Natural killer cell (primary cell): ENCODE measurements at regions of chr12 and their contacts with region 1.

Region 1: DNA sequence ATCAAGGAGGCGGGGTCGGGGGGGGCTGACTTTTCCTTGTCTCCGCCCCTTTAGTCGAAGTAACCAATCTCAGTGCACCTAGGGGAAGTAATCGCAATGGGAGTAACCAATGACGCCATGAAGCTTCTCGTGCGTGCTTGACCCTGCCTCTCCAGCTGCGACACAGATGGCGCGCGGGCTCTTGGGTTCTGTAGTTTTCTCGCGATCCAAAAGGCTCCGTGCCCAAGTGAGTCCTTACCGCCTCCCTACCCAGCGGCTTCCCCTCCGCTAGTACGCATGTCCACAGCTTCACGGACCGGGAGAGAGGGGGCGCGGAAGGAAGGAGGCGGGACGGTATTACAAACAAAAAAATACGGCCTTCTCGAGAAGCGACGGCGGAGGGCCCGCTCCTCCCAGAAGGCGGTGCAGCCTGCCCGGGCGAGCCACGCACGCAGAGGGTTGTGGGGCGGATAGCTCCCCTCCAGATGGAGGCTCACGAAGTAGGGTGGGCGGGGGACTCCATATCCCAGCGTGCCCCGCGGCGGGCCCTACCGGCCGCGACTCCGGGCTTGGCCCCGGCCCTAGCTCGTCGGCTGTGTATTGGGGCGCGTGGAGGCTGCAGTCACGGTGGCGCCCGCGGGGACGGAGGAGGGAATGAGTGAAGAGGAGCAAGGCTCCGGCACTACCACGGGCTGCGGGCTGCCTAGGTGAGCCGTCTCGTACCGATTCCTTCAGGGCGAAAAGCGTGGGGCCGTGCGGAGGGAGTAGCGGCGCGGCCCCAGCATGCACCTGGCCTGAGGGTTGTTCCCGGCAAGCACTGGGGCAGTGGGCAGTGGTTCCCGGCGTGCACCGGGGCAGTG is at the start of gene TARBP2:
- DNase-seq: peak; percentile 97 to 99
- ATAC-seq: peak; percentile 78 to 92 (median 82)
- H3K4me3 ChIP-seq: peak within 1 kb of the TSS; percentile 56
- H3K4me3 Mint-ChIP-seq: peak within 1 kb of the TSS; percentile 99
- H3K27ac ChIP-seq: peak within 1 kb of the TSS; percentile 99
- H3K27ac Mint-ChIP-seq: peak within 1 kb of the TSS; percentile 98 to 99
- H3K4me1 ChIP-seq: peaks cover 34% of the 10 kb centered on the region
- H3K4me1 Mint-ChIP-seq: peaks cover 18 to 37% of the 10 kb centered on the region in 2 donors
- H3K27me3 ChIP-seq: no peaks in the 10 kb centered on the region
- H3K27me3 Mint-ChIP-seq: no peaks in the 10 kb centered on the region
- CTCF ChIP-seq: no peak
- total RNA-seq, gene TARBP2: 23.8 to 35.1 (median 33.7) TPM

Region 2: DNA sequence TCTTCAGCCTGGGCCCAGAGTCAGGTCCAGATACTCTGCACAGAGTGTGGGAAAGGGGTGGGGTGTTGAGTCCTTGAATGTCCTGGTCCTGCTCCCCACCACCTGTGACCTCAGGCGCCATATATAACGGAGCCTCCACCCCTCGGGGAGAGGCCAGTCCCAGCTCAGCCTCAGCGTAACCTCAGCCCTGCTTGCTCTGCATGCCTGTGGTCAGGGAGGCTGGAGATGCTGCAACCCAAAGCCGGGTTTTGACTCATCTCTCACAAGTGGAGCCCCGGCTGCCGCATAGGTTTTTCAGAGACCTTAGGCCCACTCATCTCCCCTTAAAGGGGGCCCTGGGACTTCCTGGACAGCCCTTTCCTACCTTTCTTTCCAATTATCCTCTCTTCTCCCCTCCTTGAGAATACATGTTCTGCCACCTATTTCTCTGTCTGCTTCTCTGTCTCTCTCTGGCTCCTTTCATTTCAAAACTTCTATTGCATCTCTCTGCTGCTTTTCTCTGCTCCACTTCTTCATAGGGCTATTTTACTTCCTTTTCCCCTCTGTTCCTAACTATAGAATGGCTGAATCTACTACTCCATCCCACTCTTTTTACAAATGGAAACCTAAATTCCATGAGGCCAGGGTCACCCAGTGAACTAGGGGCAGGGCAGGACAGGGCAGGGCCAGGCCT is 295.1 kb before region 1 on chr12:
- intact Hi-C with region 1: loop called (anchors 10 kb)
- DNase-seq: peak; percentile 50 to 67
- ATAC-seq: peak; percentile 78 to 89 (median 81)
- H3K4me3 ChIP-seq: peak overlapping the region; percentile 47
- H3K4me3 Mint-ChIP-seq: peak overlapping the region; percentile 68
- H3K27ac ChIP-seq: peak overlapping the region; percentile 52
- H3K27ac Mint-ChIP-seq: peak overlapping the region; percentile 75 to 79
- H3K4me1 ChIP-seq: peaks cover 74% of the 10 kb centered on the region
- H3K4me1 Mint-ChIP-seq: peaks cover 58 to 71% of the 10 kb centered on the region in 2 donors
- H3K27me3 ChIP-seq: no peaks in the 10 kb centered on the region
- H3K27me3 Mint-ChIP-seq: no peaks in the 10 kb centered on the region
- CTCF ChIP-seq: no peak

Region 3: DNA sequence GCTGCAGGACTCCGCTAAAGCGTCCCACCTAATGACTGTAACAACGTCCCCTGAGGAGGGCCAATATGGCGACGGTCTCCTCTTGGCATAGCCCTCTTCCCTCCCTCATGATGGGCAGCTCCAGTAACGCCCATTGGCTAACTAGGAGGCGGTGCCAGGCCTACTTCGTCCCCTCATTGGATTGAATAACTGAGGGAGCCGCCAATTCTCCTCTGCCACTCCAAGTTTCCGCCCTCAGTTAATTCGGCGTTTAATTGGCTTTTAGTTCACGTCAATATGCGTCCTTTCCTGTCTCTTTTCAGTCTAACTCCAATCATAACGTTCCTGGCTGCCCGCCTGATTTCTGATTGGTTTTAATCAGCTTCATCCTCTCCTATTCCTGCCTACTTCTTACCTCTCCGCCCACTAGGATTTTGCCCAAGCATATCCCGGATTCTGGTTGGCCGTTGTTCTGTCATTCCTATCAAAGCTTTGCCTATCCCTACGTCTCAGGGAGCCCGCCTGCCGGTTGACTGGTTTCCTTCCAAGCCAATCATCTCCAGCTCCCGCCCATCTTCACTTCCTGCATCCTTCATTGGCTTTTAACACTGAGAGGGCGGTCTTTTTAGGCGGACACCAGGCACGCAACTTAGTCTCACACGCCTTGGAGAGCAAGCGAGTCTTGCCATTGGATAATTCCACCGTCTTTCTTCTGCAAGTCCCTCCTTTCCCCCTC is 121.4 kb before region 1 on chr12:
- intact Hi-C with region 1: loop called (anchors 2 kb)
- DNase-seq: peak in 1 of 2 donors; percentile 100
- ATAC-seq: peak; percentile 73 to 87 (median 76)
- H3K4me3 ChIP-seq: peak overlapping the region; percentile 53
- H3K4me3 Mint-ChIP-seq: no peak overlapping the region
- H3K27ac ChIP-seq: peak overlapping the region; percentile 74
- H3K27ac Mint-ChIP-seq: no peak overlapping the region
- H3K4me1 ChIP-seq: peaks cover 41% of the 10 kb centered on the region
- H3K4me1 Mint-ChIP-seq: peaks cover 27 to 35% of the 10 kb centered on the region in 2 donors
- H3K27me3 ChIP-seq: no peaks in the 10 kb centered on the region
- H3K27me3 Mint-ChIP-seq: no peaks in the 10 kb centered on the region
- CTCF ChIP-seq: no peak

Region 4: DNA sequence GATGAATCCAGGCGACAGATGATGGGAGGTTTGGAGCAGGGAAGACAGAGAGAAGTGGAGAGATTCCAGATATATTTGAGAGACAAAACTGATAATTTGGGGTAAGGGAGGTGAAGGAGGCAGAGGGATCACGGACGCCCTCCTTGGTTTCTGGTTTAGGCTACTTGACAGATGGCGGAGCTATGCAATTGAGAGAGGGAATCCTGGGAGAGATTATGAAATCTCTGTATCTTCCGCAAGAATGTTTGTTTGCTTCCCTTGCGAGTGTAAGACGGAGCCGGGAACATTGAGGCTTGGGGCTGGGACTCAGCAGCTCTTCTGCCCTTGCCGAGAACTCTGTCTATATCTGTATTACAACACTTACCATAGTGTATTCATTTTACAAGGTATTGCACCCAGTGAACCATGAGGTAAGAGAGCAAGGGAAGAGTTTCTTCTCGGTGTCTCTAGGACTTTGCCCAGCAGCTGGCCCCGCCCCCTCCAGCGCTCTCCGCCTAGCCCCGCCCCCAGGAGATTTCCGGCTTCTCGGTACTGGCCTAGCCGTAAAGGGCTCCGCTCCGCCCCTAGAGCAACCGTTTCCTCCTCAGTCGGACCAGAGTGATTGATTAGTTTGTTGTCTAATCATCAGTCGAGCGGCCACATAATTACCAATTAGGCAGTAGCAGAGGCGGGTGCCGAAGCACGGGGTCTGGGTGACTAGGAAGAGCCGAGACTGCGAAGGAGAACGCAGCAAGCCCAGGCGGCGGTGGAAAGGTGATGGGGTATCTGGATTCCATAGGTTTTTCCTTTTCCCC is 59.8 kb before region 1 on chr12 and contains the start of gene PRR13:
- intact Hi-C with region 1: loop called (anchors 1 kb)
- DNase-seq: peak; percentile 93 to 99
- ATAC-seq: peak; percentile 97 to 100 (median 99)
- H3K4me3 ChIP-seq: peak within 1 kb of the TSS; percentile 99
- H3K4me3 Mint-ChIP-seq: peak within 1 kb of the TSS; percentile 99
- H3K27ac ChIP-seq: peak within 1 kb of the TSS; percentile 82
- H3K27ac Mint-ChIP-seq: peak within 1 kb of the TSS; percentile 94 to 96
- H3K4me1 ChIP-seq: peaks cover 36% of the 10 kb centered on the region
- H3K4me1 Mint-ChIP-seq: peaks cover 38 to 50% of the 10 kb centered on the region in 2 donors
- H3K27me3 ChIP-seq: no peaks in the 10 kb centered on the region
- H3K27me3 Mint-ChIP-seq: no peaks in the 10 kb centered on the region
- CTCF ChIP-seq: no peak
- total RNA-seq, gene PRR13: 214 to 233 (median 231) TPM

Region 5: DNA sequence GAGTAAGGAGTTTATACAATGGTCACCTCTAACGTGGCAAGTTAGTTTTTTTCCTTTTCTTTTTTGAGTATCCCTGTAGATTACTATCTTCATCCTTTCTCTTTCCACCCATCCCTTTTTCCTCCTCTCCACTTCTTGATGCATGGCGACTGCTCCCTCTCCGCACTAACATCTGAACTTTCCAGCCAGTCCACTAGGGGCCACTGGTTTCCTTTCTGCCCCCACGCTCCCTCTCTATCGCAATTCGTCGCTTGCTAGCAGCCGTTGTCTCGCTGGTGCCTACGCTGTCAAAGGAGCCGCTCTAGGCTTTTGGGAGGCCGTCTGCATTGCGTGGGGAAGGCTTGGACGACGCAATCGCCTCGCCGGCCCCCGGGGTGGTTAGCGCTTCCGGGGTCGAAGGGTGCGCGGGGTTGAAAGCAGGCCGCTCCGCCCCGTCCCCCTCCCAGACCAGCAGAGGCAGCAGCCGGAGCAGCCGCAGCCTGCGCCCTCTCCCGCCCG is 49.3 kb before region 1 on chr12 and contains the start of gene PCBP2:
- intact Hi-C with region 1: loop called (anchors 2 kb)
- DNase-seq: peak; percentile 93 to 99
- ATAC-seq: peak; percentile 89 to 96 (median 90)
- H3K4me3 ChIP-seq: peak within 1 kb of the TSS; percentile 97
- H3K4me3 Mint-ChIP-seq: peak within 1 kb of the TSS; percentile 88
- H3K27ac ChIP-seq: peak within 1 kb of the TSS; percentile 95
- H3K27ac Mint-ChIP-seq: peak within 1 kb of the TSS; percentile 81 to 86
- H3K4me1 ChIP-seq: peaks cover 4% of the 10 kb centered on the region
- H3K4me1 Mint-ChIP-seq: peaks cover 34 to 39% of the 10 kb centered on the region in 2 donors
- H3K27me3 ChIP-seq: no peaks in the 10 kb centered on the region
- H3K27me3 Mint-ChIP-seq: no peaks in the 10 kb centered on the region
- CTCF ChIP-seq: peak; percentile 85
- total RNA-seq, gene PCBP2: 910 to 1,083 (median 943) TPM

Region 6: GRCh38 chr12:53727310-53728041 is 226.5 kb after region 1 on chr12 and contains the start of gene CALCOCO1:
- intact Hi-C with region 1: loop called (anchors 1 kb)
- DNase-seq: peak; percentile 92 to 99
- ATAC-seq: peak; percentile 92 to 99 (median 94)
- H3K4me3 ChIP-seq: peak within 1 kb of the TSS; percentile 43
- H3K4me3 Mint-ChIP-seq: peak within 1 kb of the TSS; percentile 93
- H3K27ac ChIP-seq: peak within 1 kb of the TSS; percentile 76
- H3K27ac Mint-ChIP-seq: peak within 1 kb of the TSS; percentile 90 to 92
- H3K4me1 ChIP-seq: peaks cover 18% of the 10 kb centered on the region
- H3K4me1 Mint-ChIP-seq: peaks cover 30 to 36% of the 10 kb centered on the region in 2 donors
- H3K27me3 ChIP-seq: no peaks in the 10 kb centered on the region
- H3K27me3 Mint-ChIP-seq: peaks cover 4 to 10% of the 10 kb centered on the region in 2 donors
- CTCF ChIP-seq: no peak
- total RNA-seq, gene CALCOCO1: 215 to 256 (median 226) TPM